ENCODE measurements at regions of chr16 and their contacts with region 1.

Region 1: DNA sequence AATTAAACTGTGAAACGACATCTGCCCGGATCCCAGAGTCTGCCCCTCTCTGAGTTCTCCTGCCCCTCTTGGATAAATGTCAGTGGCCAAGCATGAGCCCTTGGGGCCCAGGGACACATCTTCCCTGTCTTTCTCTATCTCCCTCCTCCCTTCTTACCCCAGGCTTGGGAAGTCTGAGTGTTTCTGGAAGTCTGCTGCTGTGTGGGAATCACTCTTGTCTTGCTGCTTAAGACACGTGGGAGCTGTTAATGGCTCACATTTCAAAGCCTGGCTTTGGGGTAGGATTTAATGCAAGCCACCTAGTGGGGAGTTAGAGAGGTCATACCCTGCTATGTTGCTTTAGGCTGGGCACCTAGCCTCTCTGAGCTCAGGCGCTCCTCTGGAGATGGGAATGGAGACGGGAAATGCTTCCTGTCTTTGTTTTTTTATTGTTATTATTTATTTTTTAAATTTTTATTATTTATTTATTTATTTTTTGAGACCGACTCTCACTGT is 218.5 kb upstream of the CIBAR2 start:
- DNase-seq: no peak
- ATAC-seq: peak; percentile 32
- H3K4me3 Mint-ChIP-seq: peak overlapping the region; percentile 53
- H3K27ac Mint-ChIP-seq: peak overlapping the region; percentile 47; the same call in 1 of the 2 replicates
- H3K4me1 Mint-ChIP-seq: peaks cover 73% of the 10 kb centered on the region
- H3K27me3 Mint-ChIP-seq: peaks cover 52% of the 10 kb centered on the region
- CTCF ChIP-seq: no peak

Region 2: GRCh38 chr16:85296859-85297660 is 33.7 kb before region 1 on chr16:
- CTCF ChIA-PET with region 1: interaction called, 18 read pairs
- POLR2A ChIA-PET with region 1: no interaction called
- DNase-seq: peak; percentile 78
- ATAC-seq: peak; percentile 93
- H3K4me3 Mint-ChIP-seq: no peak overlapping the region
- H3K27ac Mint-ChIP-seq: no peak overlapping the region
- H3K4me1 Mint-ChIP-seq: peaks cover 17% of the 10 kb centered on the region
- H3K27me3 Mint-ChIP-seq: no peaks in the 10 kb centered on the region
- CTCF ChIP-seq: peak; percentile 71

Region 3: GRCh38 chr16:85303357-85303901 is 27.3 kb before region 1 on chr16:
- CTCF ChIA-PET with region 1: interaction called, 21 read pairs
- POLR2A ChIA-PET with region 1: no interaction called
- DNase-seq: peak; percentile 81
- ATAC-seq: peak; percentile 76
- H3K4me3 Mint-ChIP-seq: 0 out of 2 replicates have a peak overlapping the region, but pooled peaks have one; percentile 10
- H3K27ac Mint-ChIP-seq: no peak overlapping the region
- H3K4me1 Mint-ChIP-seq: peaks cover 53% of the 10 kb centered on the region
- H3K27me3 Mint-ChIP-seq: no peaks in the 10 kb centered on the region
- CTCF ChIP-seq: peak; percentile 98

Region 4: DNA sequence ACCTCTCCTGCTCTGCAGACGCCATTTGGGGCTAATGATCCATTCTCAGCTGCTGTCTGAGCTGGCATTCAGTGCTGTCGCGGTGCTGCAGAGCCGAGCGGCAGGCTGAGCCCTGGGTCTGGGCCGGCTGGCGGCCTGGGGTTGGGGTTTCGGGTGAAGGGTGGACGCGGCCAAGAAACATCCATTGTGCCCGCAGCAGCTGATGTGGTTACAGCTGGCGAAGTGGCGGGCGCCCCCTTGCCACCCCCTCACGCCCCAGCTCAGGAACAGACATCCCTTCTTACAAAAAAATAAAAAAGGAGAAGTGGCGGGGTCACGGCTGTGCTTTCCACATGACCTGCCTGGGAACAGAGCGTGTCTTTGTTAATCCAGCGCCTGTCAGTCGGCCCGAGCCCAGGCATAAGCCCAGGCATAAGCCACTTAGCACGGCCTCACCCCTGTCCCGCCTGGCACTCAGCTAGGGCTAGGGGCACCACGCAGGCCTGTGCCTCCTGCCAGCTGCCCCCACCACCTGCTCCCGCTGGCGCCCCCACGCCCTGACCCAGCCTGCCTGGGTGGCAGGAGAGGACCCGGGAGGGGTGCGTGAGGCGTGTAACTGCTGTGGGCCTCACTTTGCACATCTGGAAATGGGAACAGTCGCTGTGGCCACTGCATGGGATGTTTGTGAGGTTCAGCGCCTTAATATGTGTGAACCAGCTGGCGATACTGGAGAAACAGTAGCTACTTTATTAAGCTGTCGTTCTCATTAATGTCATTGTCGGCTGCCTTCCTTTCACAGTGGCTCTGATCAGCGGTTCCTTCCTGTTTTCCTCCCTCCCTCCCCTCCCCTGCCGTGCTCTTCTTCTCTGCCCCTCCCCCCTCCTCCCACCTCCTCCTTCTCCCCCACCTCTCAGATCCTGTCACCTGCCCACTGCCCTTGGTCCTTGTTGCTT is 20.8 kb before region 1 on chr16:
- CTCF ChIA-PET with region 1: interaction called, 23 read pairs
- POLR2A ChIA-PET with region 1: no interaction called
- DNase-seq: no peak
- ATAC-seq: peak; percentile 7
- H3K4me3 Mint-ChIP-seq: no peak overlapping the region
- H3K27ac Mint-ChIP-seq: no peak overlapping the region
- H3K4me1 Mint-ChIP-seq: peaks cover 68% of the 10 kb centered on the region
- H3K27me3 Mint-ChIP-seq: no peaks in the 10 kb centered on the region; the same call in 1 of the 2 replicates
- CTCF ChIP-seq: no peak